AG04449 (cell line): ENCODE measurements at regions of chr18 and their contacts with region 1.

Region 1: GRCh38 chr18:55228191-55228590 is 268.9 kb upstream of the CCDC68 start:
- DNase-seq: no peak
- H3K4me3 ChIP-seq: no peak overlapping the region
- CTCF ChIP-seq: no peak

Region 2: GRCh38 chr18:54742659-54743604 is 485.3 kb before region 1 on chr18:
- CTCF ChIA-PET with region 1: no interaction called
- POLR2A ChIA-PET with region 1: no interaction called
- DNase-seq: peak; percentile 98
- H3K4me3 ChIP-seq: no peak overlapping the region
- CTCF ChIP-seq: no peak

Region 3: GRCh38 chr18:55096261-55096951 is 131.8 kb before region 1 on chr18:
- CTCF ChIA-PET with region 1: interaction called, 12 read pairs
- POLR2A ChIA-PET with region 1: no interaction called
- DNase-seq: peak; percentile 38
- H3K4me3 ChIP-seq: 0 out of 2 replicates have a peak overlapping the region, but pooled peaks have one; percentile 19
- CTCF ChIP-seq: peak; percentile 71